Motor neuron (in vitro differentiated cells): ENCODE measurements at regions of chr16 and their contacts with region 1.

Region 1: DNA sequence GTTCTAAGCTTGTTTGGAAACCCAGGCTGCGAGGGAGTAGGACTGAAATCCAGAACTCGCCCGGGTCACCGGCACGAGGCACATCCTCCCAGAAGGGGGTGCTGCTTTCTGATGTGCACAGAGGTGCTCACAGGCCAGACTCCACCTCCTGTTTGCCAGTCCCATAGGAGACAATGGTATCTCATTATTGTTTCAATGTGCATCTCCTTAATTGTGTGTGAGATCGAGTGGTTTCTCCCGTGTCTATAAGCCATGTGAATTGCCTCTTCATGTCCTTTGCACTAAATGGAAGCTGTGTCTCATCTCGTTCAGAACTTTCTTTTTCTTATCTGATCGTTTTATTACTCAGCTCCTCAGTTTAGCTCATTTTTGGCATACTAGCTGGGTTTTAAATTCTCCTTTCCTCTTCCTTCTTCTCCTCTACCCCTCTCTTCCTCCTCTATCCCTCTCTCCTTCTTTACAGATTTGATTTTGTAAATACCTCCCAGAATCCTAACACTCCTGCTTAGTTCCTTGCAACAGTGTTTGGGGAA is 32.1 kb upstream of the PRKCB start:
- ATAC-seq: peak; percentile 46 to 90 (median 66)
- H3K4me3 ChIP-seq: no peak overlapping the region
- H3K27ac ChIP-seq: no peak overlapping the region
- H3K4me1 ChIP-seq: no peaks in the 10 kb centered on the region

Region 2: GRCh38 chr16:23905027-23905426 is 101.4 kb after region 1 on chr16:
- in situ Hi-C with region 1: loop called in 1 of 9 experiments (anchors 25 kb)
- ATAC-seq: peak in 6 of 8 experiments; percentile 64 to 98 (median 71)
- H3K4me3 ChIP-seq: no peak overlapping the region
- H3K27ac ChIP-seq: no peak overlapping the region
- H3K4me1 ChIP-seq: peaks cover 2 to 4% of the 10 kb centered on the region in 2 donors

Region 3: DNA sequence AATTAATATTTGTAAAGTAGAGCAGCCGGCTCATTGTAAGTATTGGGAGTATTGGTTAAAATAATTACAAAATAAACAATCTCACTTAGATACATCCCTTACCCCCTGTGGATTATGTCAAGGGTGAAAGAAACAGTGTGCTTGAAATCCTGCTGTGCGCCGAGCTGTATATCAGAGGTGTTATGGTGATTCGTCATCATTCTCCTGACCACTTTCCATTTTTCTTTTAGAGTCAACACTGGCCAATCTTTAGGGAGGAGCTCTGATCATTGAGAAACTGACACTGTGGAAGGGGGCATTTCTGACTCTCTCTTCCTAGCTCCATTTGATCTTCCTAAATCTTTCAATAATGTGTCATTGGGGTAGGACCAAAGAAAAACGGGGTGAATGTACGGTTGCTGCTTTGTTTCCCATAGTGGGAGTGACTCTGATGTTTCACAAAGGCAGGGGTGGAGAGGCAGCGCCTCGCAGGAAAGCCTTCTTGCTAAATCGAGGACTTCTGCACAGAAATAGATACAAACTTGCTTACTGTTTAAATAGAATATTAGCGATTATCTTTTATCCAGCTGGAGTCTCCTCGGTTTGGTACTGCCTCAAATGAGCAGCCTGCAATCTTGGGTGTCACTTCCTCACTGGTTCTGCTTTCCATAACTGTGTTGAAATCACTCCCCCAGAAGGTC is 155.6 kb after region 1 on chr16:
- in situ Hi-C with region 1: no loop called
- ATAC-seq: no peak
- H3K4me3 ChIP-seq: no peak overlapping the region
- H3K27ac ChIP-seq: no peak overlapping the region
- H3K4me1 ChIP-seq: peaks cover 0 to 4% of the 10 kb centered on the region in 2 donors

Region 4: DNA sequence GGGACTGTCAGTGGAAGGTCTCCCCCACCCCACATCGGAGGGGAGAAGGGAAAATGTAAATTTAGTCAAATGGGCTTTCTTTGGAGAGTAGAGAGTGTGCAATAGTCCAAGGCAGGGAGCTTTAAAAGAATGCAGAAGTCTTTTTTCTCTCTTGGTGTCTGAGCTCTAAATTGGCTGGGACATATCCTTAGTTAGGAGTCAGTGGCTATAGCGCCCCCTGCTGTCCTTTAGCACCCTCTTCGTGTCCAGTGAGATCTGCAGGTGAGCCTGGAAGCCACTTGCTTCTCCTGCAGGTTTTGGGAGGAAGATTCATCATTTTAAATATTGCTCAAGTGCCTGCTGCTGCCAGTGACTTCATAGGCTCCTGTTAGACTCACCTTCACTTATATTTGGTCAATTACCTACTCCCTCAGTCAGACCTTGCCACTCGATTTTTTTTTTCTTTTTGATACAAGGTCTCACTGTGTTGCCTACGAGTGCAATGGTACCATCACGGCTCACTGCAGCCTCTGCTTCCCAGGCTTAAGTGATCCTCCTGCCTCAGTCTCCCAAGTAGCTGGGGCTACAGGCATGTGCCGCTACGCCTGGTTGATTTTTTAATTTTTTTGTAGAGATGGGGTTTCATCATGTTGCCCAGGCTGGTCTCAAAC is 206.9 kb after region 1 on chr16:
- in situ Hi-C with region 1: loop called in 4 of 9 experiments (anchors 25 kb)
- ATAC-seq: peak; percentile 54 to 91 (median 76)
- H3K4me3 ChIP-seq: no peak overlapping the region
- H3K27ac ChIP-seq: no peak overlapping the region
- H3K4me1 ChIP-seq: no peaks in the 10 kb centered on the region